ENCODE measurements at regions of chr10 and their contacts with region 1.

Region 1: GRCh38 chr10:11260170-11260569 is 242.5 kb downstream of the CELF2 start:
- DNase-seq: no peak
- ATAC-seq: no peak

Region 2: DNA sequence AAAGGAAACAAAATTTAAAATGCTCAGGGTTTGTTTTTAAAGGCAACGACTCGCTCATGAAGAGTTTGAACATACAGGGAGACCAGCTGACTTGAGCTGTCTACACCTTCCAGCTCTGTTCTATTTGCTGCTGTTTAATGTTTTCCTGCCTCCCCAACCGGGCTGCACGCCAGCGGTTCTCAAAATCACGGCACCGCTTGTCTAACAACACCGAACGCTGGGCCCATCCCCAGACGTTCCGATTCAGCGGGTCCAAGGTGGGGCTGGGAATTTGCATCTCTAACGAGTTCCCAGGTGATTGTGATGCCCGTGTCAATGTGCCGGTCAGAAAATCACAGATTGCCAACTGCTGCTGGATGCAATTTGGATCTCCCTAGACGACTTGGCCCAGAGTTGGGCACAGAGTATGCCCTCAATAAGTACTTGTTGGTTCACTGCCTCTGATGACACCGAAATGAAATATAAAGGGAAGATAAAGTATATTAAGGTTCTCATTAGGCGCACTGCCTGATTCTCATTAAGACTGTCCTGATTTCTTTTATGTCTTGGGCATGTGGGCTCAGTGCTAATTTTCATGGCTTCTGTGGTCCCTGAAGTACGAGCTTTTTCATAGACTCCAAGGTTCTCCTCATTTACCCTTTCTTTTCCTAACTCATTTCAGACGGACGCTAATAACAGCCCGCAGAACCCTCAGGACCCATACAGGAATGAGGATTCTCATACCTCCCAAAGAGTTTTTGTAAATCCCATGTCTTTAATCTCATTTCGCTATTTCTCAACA is 214.0 kb before region 1 on chr10:
- intact Hi-C with region 1: loop called in 1 of 2 experiments (anchors 10 kb)
- DNase-seq: peak; percentile 74
- ATAC-seq: peak; percentile 72 to 82

Region 3: GRCh38 chr10:11113156-11113555 is 147.0 kb before region 1 on chr10:
- intact Hi-C with region 1: loop called in 1 of 2 experiments (anchors 10 kb)
- DNase-seq: no peak
- ATAC-seq: no peak

Measured in left cardiac atrium (tissue), 4 donors.